Left cardiac atrium (tissue), 4 donors: ENCODE measurements at regions of chr4 and their contacts with region 1.

Region 1: GRCh38 chr4:109648266-109648996 is 54.8 kb downstream of the CASP6 start:
- DNase-seq: no peak
- ATAC-seq: peak in 1 of 2 donors; percentile 64

Region 2: DNA sequence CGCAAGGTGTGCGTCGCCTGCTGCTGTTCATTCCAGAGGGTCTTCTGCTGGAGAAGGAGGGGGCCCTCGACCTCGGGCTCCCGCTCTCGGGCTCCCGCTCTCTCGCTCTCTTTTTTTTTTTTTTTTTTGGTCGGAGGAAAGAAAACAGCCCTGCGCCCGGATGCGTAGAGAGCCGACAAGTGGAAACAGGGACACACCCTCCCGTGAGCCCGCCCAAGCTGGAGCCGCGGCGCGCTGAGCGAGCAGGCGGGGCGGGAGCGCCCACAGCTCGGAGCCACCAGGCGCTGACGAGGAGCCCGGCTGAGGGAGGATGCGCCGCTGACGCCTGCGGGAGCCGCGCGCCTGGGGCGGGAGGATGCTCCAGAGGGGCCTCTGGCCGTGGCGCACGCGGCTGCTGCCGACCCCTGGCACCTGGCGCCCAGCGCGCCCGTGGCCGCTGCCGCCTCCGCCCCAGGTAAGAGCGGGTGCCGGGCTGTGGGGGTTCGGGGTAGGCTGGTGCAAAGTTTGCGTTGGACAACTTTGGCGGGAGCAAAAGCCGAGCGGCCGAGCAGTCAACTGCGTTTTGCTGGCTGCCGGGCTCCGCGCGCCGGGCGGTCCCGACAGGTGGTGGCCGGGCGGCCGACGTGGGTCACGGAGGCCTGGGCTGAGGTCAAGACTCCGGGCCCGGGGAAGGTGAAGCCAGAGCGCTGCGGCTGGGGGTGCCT is 88.3 kb before region 1 on chr4 and contains the start of gene MCUB:
- intact Hi-C with region 1: loop called in 1 of 2 experiments (anchors 10 kb)
- DNase-seq: peak; percentile 93
- ATAC-seq: peak; percentile 98 to 99
- total RNA-seq, gene MCUB: 25.9 to 27.7 TPM

Region 3: GRCh38 chr4:109608879-109609278 is 39.6 kb before region 1 on chr4:
- intact Hi-C with region 1: loop called in 1 of 2 experiments (anchors 5 kb)
- DNase-seq: no peak
- ATAC-seq: peak in 1 of 2 donors; percentile 35